MCF 10A (cell line): ENCODE measurements at regions of chr2 and their contacts with region 1.

Region 1: DNA sequence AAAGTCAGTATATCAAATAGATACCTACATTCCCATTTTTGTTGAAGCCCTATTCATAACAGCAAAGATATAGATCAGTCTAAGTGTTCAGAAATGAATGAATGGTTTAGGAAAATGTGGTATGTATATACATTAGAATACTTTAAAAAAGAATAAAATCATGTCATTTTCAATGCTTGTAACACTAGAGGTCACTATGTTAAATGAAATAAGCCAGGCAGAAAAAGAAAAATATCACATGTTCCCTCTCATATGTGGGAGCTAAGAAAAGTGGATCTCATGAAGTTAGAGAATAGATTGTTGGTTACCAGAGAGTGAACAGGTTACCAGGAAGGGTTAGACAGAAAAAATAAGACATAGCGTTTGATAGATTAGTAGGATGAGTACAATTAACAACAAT is 1111.0 kb upstream of the SLC39A10 start:
- DNase-seq: peak; percentile 16
- H3K4me3 Mint-ChIP-seq: no peak overlapping the region
- H3K27ac Mint-ChIP-seq: peak overlapping the region; percentile 16
- H3K4me1 Mint-ChIP-seq: peaks cover 9% of the 10 kb centered on the region
- H3K27me3 Mint-ChIP-seq: no peaks in the 10 kb centered on the region
- CTCF ChIP-seq: peak; percentile 35

Region 2: GRCh38 chr2:194104687-194105086 is 441.3 kb before region 1 on chr2:
- CTCF ChIA-PET with region 1: no interaction called
- POLR2A ChIA-PET with region 1: no interaction called
- intact Hi-C with region 1: no loop called
- DNase-seq: peak; percentile 4
- H3K4me3 Mint-ChIP-seq: no peak overlapping the region
- H3K27ac Mint-ChIP-seq: peak overlapping the region; percentile 54
- H3K4me1 Mint-ChIP-seq: peaks cover 5% of the 10 kb centered on the region
- H3K27me3 Mint-ChIP-seq: no peaks in the 10 kb centered on the region
- CTCF ChIP-seq: no peak

Region 3: DNA sequence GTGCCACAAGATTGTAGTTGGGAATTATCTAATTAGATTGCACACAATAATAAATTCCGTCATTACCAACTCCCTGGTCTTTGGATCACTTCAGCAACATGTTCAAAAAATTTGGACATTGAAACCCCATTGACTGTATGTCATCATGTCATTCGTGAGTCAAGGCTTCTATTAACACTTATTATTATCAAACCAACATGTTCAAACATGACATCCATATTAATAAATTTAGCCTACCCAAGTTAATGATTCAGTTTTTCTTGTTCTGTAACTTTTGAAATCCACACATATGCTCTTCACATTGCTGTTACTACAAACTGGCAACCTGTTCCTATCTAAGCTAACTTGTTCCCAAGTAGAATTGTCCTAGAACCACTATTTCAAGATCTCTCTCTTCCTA is 31.7 kb before region 1 on chr2:
- CTCF ChIA-PET with region 1: no interaction called
- POLR2A ChIA-PET with region 1: no interaction called
- intact Hi-C with region 1: no loop called
- DNase-seq: no peak
- H3K4me3 Mint-ChIP-seq: no peak overlapping the region
- H3K27ac Mint-ChIP-seq: no peak overlapping the region
- H3K4me1 Mint-ChIP-seq: no peaks in the 10 kb centered on the region
- H3K27me3 Mint-ChIP-seq: no peaks in the 10 kb centered on the region
- CTCF ChIP-seq: no peak

Region 4: DNA sequence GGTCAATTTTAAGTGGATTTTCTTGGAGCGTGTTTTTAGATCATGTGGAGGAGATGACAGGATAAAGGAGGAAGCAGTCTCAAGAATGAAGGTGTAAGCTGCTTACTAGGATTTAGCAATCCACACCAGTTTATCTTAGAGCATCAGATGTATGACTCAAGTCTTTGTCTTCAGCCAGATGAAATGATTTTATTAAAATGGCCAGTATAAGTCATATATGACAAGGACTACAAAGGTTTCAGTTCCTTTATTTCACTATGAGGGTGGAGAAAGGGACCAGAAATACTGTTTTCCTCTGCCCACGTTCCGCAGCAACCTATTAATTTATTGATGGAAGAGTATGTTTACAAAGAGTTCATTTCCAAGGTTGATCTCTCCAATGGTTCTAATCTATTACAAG is 140.6 kb after region 1 on chr2:
- CTCF ChIA-PET with region 1: no interaction called
- POLR2A ChIA-PET with region 1: no interaction called
- intact Hi-C with region 1: no loop called
- DNase-seq: peak; percentile 6
- H3K4me3 Mint-ChIP-seq: no peak overlapping the region
- H3K27ac Mint-ChIP-seq: no peak overlapping the region
- H3K4me1 Mint-ChIP-seq: no peaks in the 10 kb centered on the region
- H3K27me3 Mint-ChIP-seq: no peaks in the 10 kb centered on the region
- CTCF ChIP-seq: no peak

Region 5: GRCh38 chr2:194819344-194819743 is 273.4 kb after region 1 on chr2:
- CTCF ChIA-PET with region 1: interaction called, 4 read pairs
- POLR2A ChIA-PET with region 1: no interaction called
- intact Hi-C with region 1: loop called (anchors 1 kb)
- DNase-seq: peak; percentile 50
- H3K4me3 Mint-ChIP-seq: no peak overlapping the region
- H3K27ac Mint-ChIP-seq: no peak overlapping the region
- H3K4me1 Mint-ChIP-seq: no peaks in the 10 kb centered on the region
- H3K27me3 Mint-ChIP-seq: no peaks in the 10 kb centered on the region
- CTCF ChIP-seq: peak; percentile 20

Region 6: GRCh38 chr2:194867328-194867727 is 321.4 kb after region 1 on chr2:
- CTCF ChIA-PET with region 1: interaction called, 8 read pairs
- POLR2A ChIA-PET with region 1: no interaction called
- intact Hi-C with region 1: loop called (anchors 2 kb)
- DNase-seq: peak; percentile 45
- H3K4me3 Mint-ChIP-seq: no peak overlapping the region
- H3K27ac Mint-ChIP-seq: no peak overlapping the region
- H3K4me1 Mint-ChIP-seq: peaks cover 9% of the 10 kb centered on the region
- H3K27me3 Mint-ChIP-seq: no peaks in the 10 kb centered on the region
- CTCF ChIP-seq: peak; percentile 43

Region 7: GRCh38 chr2:195937176-195937575 is 1391.2 kb after region 1 on chr2:
- CTCF ChIA-PET with region 1: interaction called, 4 read pairs
- POLR2A ChIA-PET with region 1: no interaction called
- intact Hi-C with region 1: loop called (anchors 1 kb)
- DNase-seq: no peak
- H3K4me3 Mint-ChIP-seq: no peak overlapping the region
- H3K27ac Mint-ChIP-seq: no peak overlapping the region
- H3K4me1 Mint-ChIP-seq: no peaks in the 10 kb centered on the region
- H3K27me3 Mint-ChIP-seq: no peaks in the 10 kb centered on the region
- CTCF ChIP-seq: no peak